ENCODE measurements at regions of chr12 and their contacts with region 1.

Region 1: GRCh38 chr12:94459728-94460615 is at the start of gene CEP83:
- DNase-seq: peak; percentile 89 to 97 (median 94)
- ATAC-seq: peak; percentile 99
- H3K4me3 ChIP-seq: peak within 1 kb of the TSS; percentile 68
- H3K4me3 Mint-ChIP-seq: peak within 1 kb of the TSS; percentile 92 to 98 (median 96)
- H3K27ac ChIP-seq: peak within 1 kb of the TSS; percentile 91
- H3K27ac Mint-ChIP-seq: peak within 1 kb of the TSS; percentile 70 to 97 (median 94)
- H3K4me1 ChIP-seq: peaks cover 3 to 13% of the 10 kb centered on the region in 2 donors
- H3K4me1 Mint-ChIP-seq: peaks cover 10 to 38% (median 30%) of the 10 kb centered on the region in 7 donors
- H3K27me3 ChIP-seq: no peaks in the 10 kb centered on the region
- H3K27me3 Mint-ChIP-seq: peaks cover 0 to 12% (median 6%) of the 10 kb centered on the region in 5 donors
- total RNA-seq, gene CEP83: 12.8 to 22.7 (median 16.8) TPM

Region 2: GRCh38 chr12:93378373-93379325 is 1081.3 kb before region 1 on chr12:
- CTCF ChIA-PET with region 1: no interaction called
- POLR2A ChIA-PET with region 1: no interaction called
- intact Hi-C with region 1: loop called in 1 of 2 experiments (anchors 2 kb)
- DNase-seq: peak; percentile 47 to 73 (median 69)
- ATAC-seq: peak; percentile 60
- H3K4me3 ChIP-seq: peak overlapping the region; percentile 76
- H3K4me3 Mint-ChIP-seq: peak overlapping the region; percentile 98 to 100 (median 99)
- H3K27ac ChIP-seq: peak overlapping the region; percentile 94
- H3K27ac Mint-ChIP-seq: peak overlapping the region; percentile 94 to 100 (median 99)
- H3K4me1 ChIP-seq: peaks cover 19 to 22% of the 10 kb centered on the region in 2 donors
- H3K4me1 Mint-ChIP-seq: peaks cover 34 to 62% (median 51%) of the 10 kb centered on the region in 7 donors
- H3K27me3 ChIP-seq: no peaks in the 10 kb centered on the region
- H3K27me3 Mint-ChIP-seq: no peaks in the 10 kb centered on the region

Region 3: DNA sequence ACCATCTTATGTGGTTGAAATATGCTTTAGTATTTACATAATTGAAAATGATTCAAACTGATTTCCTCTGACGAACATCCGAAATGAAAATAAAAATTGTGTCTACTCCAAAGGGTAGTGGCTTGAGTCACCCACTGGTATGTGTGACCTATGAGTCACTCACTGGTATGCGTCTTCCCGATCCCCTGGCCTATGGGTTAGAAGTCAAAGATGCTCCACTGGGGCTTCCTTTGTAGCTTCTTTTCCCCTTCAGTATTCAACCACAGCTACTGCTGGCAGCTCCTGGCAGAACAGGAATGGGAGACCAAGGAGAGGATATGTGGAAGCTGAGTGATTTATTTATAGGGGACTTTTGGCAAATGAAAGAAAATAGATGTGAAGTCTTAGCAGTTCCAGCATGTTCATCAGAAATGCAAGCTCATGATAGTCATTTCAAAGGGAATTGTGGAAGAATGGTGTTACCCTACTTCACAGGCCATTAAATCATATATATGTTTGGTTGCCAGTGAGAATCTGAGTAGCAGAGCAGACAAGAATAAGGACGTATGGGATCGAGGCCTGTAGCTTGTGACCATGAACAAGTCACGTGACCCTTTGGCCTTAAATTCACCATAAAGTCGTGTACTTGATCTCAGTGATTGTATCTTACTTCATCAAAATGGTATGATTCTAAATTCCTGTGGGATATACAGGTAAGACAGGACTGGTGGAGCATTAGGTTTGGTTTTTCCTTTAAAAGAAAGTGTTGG is 674.5 kb before region 1 on chr12:
- CTCF ChIA-PET with region 1: no interaction called
- POLR2A ChIA-PET with region 1: no interaction called
- intact Hi-C with region 1: loop called in 1 of 2 experiments (anchors 1 kb)
- DNase-seq: peak in 2 of 9 donors; percentile 29 to 48
- ATAC-seq: peak; percentile 77
- H3K4me3 ChIP-seq: no peak overlapping the region
- H3K4me3 Mint-ChIP-seq: peak overlapping the region in 4 of 10 donors; percentile 2 to 87 (median 36)
- H3K27ac ChIP-seq: no peak overlapping the region
- H3K27ac Mint-ChIP-seq: peak overlapping the region in 7 of 9 donors; percentile 35 to 81 (median 58)
- H3K4me1 ChIP-seq: peaks cover 9 to 26% of the 10 kb centered on the region in 2 donors
- H3K4me1 Mint-ChIP-seq: peaks cover 26 to 64% (median 61%) of the 10 kb centered on the region in 7 donors
- H3K27me3 ChIP-seq: no peaks in the 10 kb centered on the region
- H3K27me3 Mint-ChIP-seq: no peaks in the 10 kb centered on the region

Region 4: GRCh38 chr12:94262228-94263010 is 197.6 kb before region 1 on chr12:
- CTCF ChIA-PET with region 1: no interaction called
- POLR2A ChIA-PET with region 1: interaction called, 3 read pairs
- intact Hi-C with region 1: loop called (anchors 1 to 2 kb)
- DNase-seq: peak; percentile 50 to 81 (median 72)
- ATAC-seq: peak; percentile 89
- H3K4me3 ChIP-seq: peak overlapping the region; percentile 94
- H3K4me3 Mint-ChIP-seq: peak overlapping the region; percentile 80 to 99 (median 97)
- H3K27ac ChIP-seq: peak overlapping the region; percentile 91
- H3K27ac Mint-ChIP-seq: peak overlapping the region; percentile 91 to 100 (median 99)
- H3K4me1 ChIP-seq: peaks cover 15 to 18% of the 10 kb centered on the region in 2 donors
- H3K4me1 Mint-ChIP-seq: peaks cover 23 to 52% (median 46%) of the 10 kb centered on the region in 7 donors
- H3K27me3 ChIP-seq: no peaks in the 10 kb centered on the region
- H3K27me3 Mint-ChIP-seq: no peaks in the 10 kb centered on the region

Region 5: DNA sequence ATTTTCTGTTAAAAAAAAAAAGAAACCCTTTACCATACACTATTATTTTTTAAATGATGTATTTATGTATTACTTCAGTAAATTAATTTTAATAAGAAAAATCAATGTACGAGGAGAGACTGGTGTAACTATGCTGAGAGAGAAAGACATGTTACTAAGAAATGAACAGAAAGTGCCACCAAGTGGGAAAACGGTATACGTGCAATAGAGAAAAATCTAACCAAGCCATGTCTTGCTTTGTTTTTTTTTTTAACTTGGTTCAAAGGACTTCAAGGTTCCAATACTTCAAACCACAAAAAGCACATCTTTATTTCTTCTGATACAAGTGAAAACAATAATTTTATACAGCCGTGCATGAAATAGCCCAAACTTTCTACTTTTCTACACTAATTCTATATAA is 520.6 kb after region 1 on chr12:
- CTCF ChIA-PET with region 1: no interaction called
- POLR2A ChIA-PET with region 1: no interaction called
- intact Hi-C with region 1: loop called in 1 of 2 experiments (anchors 10 kb)
- DNase-seq: peak in 7 of 9 donors; percentile 20 to 73 (median 60)
- ATAC-seq: peak; percentile 76
- H3K4me3 ChIP-seq: no peak overlapping the region
- H3K4me3 Mint-ChIP-seq: peak overlapping the region in 9 of 10 donors; percentile 24 to 73 (median 59)
- H3K27ac ChIP-seq: no peak overlapping the region
- H3K27ac Mint-ChIP-seq: peak overlapping the region in 8 of 9 donors; percentile 30 to 86 (median 72)
- H3K4me1 ChIP-seq: peaks cover 0 to 32% of the 10 kb centered on the region in 2 donors
- H3K4me1 Mint-ChIP-seq: peaks cover 22 to 88% (median 67%) of the 10 kb centered on the region in 7 donors
- H3K27me3 ChIP-seq: no peaks in the 10 kb centered on the region
- H3K27me3 Mint-ChIP-seq: no peaks in the 10 kb centered on the region

Region 6: GRCh38 chr12:95473884-95474659 is 1014.1 kb after region 1 on chr12 and contains the start of gene METAP2:
- CTCF ChIA-PET with region 1: no interaction called
- POLR2A ChIA-PET with region 1: no interaction called
- intact Hi-C with region 1: loop called (anchors 5 to 10 kb)
- DNase-seq: peak; percentile 75 to 93 (median 87)
- ATAC-seq: peak; percentile 98
- H3K4me3 ChIP-seq: peak within 1 kb of the TSS; percentile 81
- H3K4me3 Mint-ChIP-seq: peak within 1 kb of the TSS; percentile 96 to 100 (median 99)
- H3K27ac ChIP-seq: peak within 1 kb of the TSS; percentile 92
- H3K27ac Mint-ChIP-seq: peak within 1 kb of the TSS; percentile 95 to 100 (median 99)
- H3K4me1 ChIP-seq: peaks cover 10 to 39% of the 10 kb centered on the region in 2 donors
- H3K4me1 Mint-ChIP-seq: peaks cover 31 to 70% (median 55%) of the 10 kb centered on the region in 7 donors
- H3K27me3 ChIP-seq: no peaks in the 10 kb centered on the region
- H3K27me3 Mint-ChIP-seq: no peaks in the 10 kb centered on the region
- total RNA-seq, gene METAP2: 48.2 to 79.9 (median 57.3) TPM

Region 7: DNA sequence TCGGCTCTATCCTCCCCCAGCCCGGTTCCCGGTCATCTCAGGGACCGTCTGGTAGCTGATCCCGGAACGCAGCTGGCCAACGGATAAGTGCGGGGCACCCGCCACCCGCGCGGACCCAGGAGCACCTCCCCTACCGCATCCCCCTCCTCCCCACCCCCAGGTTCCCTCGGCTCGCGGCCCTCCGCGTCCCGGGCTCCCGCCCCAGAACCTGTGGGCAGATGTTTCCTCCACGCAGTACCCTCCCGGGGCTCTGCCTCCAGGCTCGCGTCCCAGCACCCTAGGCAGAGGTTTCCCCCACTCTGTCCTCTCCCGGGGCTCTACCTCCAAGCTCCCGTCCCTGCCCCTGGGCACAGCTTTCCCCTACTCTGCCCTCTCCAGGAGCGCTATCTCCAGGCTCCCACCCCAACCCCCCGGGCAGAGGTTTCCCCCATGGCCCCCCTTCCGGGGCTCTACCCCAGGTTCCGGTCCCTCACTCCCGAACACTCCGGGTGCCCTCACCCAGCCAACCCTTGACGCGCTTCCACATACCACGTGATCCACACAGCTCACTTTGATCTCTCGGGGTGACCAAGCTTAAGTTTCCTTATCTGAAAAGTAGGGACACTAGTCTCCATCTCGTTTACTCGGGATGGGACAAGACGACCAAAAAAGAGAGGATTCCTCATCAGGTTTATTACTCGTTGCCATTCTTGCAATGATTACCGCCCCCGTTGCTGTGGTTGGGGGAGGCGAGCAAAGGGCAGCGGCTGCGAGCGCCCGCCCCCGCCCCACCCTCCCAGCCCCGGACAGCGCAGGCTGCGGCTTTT is 1482.8 kb after region 1 on chr12 and contains the start of gene CCDC38:
- CTCF ChIA-PET with region 1: no interaction called
- POLR2A ChIA-PET with region 1: no interaction called
- intact Hi-C with region 1: loop called in 1 of 2 experiments (anchors 5 kb)
- DNase-seq: peak; percentile 56 to 86 (median 82)
- ATAC-seq: peak; percentile 97
- H3K4me3 ChIP-seq: peak within 1 kb of the TSS; percentile 93
- H3K4me3 Mint-ChIP-seq: peak within 1 kb of the TSS; percentile 88 to 99 (median 96)
- H3K27ac ChIP-seq: peak within 1 kb of the TSS; percentile 86
- H3K27ac Mint-ChIP-seq: peak within 1 kb of the TSS; percentile 85 to 97 (median 89)
- H3K4me1 ChIP-seq: peaks cover 6% of the 10 kb centered on the region in 2 donors
- H3K4me1 Mint-ChIP-seq: peaks cover 4 to 12% (median 10%) of the 10 kb centered on the region in 7 donors
- H3K27me3 ChIP-seq: no peaks in the 10 kb centered on the region
- H3K27me3 Mint-ChIP-seq: peaks cover 0 to 26% (median 0%) of the 10 kb centered on the region in 5 donors
- total RNA-seq, gene CCDC38: 0.07 to 0.27 TPM in 2 of 5 experiments, not detected in the others

Measured in naive thymus-derived CD4-positive, alpha-beta T cell (primary cell).